RWPE1 (cell line): ENCODE measurements at regions of chr10 and their contacts with region 1.

Region 1: DNA sequence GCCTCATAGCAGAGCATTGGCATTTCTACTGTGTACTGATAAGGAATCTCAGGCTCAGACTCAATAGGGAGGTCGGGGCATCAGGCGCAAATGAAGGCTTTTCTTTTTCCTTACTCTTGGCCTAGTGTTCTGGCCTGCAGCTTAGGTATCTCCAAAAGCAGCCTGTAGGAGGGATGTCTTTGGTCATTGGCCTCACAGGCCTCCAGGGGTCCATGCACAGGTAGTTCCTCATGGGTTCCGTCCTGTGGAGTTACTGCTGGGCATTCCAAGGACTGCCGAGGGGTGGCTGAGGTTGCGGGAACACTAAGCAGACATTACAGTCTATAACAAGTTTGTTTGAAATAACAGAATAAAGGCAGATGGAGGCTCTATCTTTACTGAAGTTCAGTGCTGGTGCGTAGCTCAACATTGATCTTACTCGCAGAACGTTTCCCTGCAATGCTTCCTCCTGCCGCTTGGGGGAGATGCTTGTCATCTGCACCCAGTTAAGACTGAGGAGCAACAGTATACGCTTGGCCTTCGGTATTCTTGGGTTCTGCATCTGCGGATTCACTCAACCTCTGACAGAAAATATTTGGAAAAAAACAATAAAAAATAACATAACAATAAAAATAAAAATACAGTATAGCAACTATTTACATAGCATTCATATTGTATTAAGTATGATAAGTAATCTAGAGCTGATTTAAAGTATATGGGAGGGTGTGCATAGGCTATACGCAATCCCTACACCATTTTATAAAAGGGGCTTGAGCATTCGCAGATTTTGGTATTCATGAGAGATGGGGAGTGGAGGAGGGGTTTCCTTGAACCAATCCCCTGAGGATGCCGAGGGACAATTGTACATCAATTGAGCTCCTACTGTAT is 58.9 kb downstream of the SH2D4B start:
- DNase-seq: peak; percentile 64
- H3K27ac ChIP-seq: no peak overlapping the region
- CTCF ChIP-seq: peak; percentile 77

Region 2: GRCh38 chr10:80619036-80619435 is 22.4 kb after region 1 on chr10:
- CTCF ChIA-PET with region 1: interaction called, 10 read pairs
- POLR2A ChIA-PET with region 1: no interaction called
- DNase-seq: peak; percentile 77
- H3K27ac ChIP-seq: no peak overlapping the region
- CTCF ChIP-seq: no peak